ENCODE measurements at regions of chr22 and their contacts with region 1.

Region 1: DNA sequence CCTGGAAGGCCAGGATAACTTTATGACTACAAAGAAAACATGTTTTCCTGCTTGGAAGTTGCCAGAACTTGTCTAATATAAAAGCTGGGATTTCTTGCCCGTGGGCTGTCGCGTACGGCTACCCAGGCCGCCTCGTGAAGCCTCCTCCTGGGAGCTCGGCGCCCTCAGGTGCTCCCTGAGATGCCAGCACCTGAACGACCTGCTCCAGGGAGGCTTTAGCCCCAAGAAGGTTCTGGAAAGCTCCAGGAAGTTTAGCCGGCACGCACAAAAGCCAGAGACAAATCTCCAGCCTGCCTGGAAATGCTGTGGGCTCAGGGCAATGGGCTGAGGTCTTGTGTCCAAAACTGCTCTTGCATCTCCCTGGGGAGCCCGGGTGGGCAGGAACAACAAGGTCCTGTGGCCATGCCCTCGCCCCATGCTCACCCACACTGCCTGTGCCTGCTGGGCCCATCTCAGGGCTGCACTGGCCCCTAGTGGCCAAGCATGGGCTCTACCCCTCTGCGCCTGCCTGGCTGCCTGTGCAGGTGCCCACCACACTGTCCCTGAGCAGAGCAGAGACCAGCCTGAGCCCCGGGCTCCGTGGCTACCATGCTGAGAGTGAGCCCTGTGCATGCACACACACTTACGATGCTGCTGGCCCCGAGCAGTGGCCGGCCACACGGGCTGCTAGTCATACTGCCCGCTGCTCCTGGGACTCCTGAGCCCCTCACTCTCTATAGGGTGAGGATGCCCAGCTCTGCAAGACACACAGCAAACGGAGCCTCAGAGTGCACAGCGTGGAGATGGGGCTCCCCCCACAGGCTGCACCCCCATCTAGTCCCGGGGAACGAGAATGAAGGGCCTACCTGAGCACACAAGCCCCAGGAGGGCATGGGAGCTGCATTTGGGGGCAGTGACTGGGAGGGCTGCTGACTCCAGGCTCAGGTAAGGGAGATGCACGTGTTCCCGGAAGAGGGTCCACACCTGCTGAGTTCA is 4.9 kb upstream of the CELSR1 start:
- DNase-seq: peak; percentile 67 to 84 (median 79)
- H3K4me3 ChIP-seq: no peak overlapping the region
- H3K27ac ChIP-seq: no peak overlapping the region
- H3K4me1 ChIP-seq: peaks cover 0 to 19% (median 11%) of the 10 kb centered on the region in 4 experiments
- H3K27me3 ChIP-seq: peaks cover 0 to 47% (median 26%) of the 10 kb centered on the region in 5 experiments

Region 2: GRCh38 chr22:46355371-46355995 is 186.8 kb before region 1 on chr22:
- CTCF ChIA-PET with region 1: interaction called, 31 read pairs
- POLR2A ChIA-PET with region 1: interaction called, 7 read pairs
- DNase-seq: peak; percentile 57 to 74 (median 67)
- H3K4me3 ChIP-seq: no peak overlapping the region
- H3K27ac ChIP-seq: no peak overlapping the region
- H3K4me1 ChIP-seq: peaks cover 0 to 12% (median 4%) of the 10 kb centered on the region in 4 experiments
- H3K27me3 ChIP-seq: peaks cover 0 to 5% (median 0%) of the 10 kb centered on the region in 5 experiments

Region 3: DNA sequence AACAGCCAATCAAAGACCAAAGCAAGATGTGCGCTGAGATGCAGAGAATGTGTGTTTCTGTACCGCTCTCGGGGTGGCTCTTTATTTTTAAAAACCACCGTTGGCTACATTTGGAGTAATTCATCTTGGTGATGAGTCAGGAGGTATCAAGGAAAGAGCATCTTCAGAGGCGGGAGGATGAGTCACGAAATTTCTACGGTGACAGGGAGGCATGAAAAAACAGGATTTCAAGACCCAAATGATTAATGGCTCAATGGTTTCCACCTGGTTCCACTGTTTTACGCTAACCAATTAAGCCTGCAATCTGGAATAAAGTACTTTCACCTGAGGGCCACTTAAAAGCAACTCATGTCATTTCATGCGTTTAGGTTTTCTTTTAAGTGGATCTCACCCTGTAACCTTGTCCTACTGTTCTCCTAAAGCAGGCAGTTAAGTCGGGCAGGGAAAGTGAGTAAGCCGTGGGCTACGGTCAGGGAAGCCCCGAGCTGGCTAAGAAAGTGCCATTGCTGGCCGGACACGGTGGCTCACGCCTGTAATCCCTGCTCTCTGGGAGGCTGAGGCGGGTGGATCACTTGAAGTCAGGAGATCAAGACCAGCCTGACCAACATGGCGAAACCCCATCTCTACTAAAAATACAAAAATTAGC is 79.4 kb before region 1 on chr22:
- CTCF ChIA-PET with region 1: no interaction called
- POLR2A ChIA-PET with region 1: no interaction called
- DNase-seq: no peak
- H3K4me3 ChIP-seq: no peak overlapping the region
- H3K27ac ChIP-seq: no peak overlapping the region
- H3K4me1 ChIP-seq: peaks cover 0 to 6% (median 1%) of the 10 kb centered on the region in 4 experiments
- H3K27me3 ChIP-seq: peaks cover 0 to 6% (median 2%) of the 10 kb centered on the region in 5 experiments

Region 4: DNA sequence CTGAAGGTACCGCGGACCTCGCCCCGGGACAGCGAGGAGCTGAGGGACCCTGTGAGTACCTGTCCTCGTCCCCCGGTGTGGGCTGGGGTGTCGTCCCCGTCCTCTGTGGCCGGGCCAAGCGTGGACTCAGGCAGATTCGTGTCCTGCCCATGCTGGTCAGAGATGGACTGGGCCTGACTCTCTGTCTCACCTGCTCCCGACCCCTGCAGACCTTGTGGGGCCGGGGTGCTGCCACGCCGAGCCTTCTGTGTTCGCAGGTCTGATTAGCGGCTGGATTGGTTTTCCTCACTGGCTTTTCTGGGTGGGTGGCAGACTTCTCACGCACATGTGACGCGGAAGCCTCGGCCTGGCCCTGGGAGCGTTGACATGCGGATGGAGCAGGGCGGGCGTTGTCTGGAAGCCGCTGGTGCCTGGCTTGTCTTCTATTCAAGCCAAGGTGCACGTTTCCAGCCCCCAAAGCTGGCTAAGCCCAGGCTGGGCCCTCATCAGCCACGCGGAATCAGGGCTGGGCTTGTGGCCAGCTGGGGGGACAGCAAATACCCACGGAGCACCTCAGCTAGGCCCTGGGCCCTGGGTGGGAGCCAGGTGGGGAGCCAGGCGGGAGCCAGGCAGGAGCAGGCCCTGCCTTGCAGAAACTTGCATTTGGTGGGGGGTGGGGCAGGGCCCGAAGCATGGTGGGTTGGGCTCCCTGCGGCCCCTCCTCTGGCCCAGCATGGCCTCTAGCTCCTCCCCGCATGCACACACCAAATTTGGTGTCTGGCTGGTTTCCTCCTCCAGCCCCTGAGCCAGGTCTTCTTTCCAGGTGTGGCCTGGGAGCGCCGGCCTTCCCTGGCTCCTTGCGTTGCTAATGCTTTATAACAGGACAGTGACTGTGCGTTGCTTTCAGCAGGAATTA is 84.9 kb after region 1 on chr22:
- CTCF ChIA-PET with region 1: no interaction called
- POLR2A ChIA-PET with region 1: no interaction called
- DNase-seq: no peak
- H3K4me3 ChIP-seq: no peak overlapping the region
- H3K27ac ChIP-seq: no peak overlapping the region
- H3K4me1 ChIP-seq: peaks cover 0 to 17% (median 3%) of the 10 kb centered on the region in 4 experiments
- H3K27me3 ChIP-seq: no peaks in the 10 kb centered on the region

Region 5: DNA sequence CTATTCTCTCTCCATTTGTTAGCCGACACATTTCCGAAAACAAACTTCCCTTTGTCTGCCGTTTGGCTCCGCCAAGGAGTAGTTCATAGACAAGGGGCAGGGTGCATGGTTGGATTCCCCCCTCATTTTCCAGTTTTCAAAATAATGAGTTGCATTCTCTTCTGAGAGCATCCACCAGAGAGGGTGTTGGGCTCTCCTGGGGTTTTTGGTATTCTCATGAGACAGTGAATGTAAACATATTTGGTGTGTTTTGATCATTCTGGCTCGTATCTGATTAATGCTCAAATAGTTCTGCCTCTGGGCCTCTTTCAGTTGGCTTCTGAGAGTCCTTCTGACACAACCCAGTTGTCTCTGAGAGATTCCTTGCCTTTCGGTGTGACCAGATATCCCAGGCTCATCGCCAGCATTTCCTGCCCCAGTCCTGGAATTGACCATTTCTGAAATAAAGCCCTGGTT is 99.5 kb after region 1 on chr22:
- CTCF ChIA-PET with region 1: no interaction called
- POLR2A ChIA-PET with region 1: no interaction called
- DNase-seq: no peak
- H3K4me3 ChIP-seq: no peak overlapping the region
- H3K27ac ChIP-seq: no peak overlapping the region
- H3K4me1 ChIP-seq: peaks cover 0 to 5% (median 1%) of the 10 kb centered on the region in 4 experiments
- H3K27me3 ChIP-seq: no peaks in the 10 kb centered on the region

Measured in common myeloid progenitor, CD34-positive (primary cell).